ENCODE measurements at regions of chr12 and their contacts with region 1.

Region 1: DNA sequence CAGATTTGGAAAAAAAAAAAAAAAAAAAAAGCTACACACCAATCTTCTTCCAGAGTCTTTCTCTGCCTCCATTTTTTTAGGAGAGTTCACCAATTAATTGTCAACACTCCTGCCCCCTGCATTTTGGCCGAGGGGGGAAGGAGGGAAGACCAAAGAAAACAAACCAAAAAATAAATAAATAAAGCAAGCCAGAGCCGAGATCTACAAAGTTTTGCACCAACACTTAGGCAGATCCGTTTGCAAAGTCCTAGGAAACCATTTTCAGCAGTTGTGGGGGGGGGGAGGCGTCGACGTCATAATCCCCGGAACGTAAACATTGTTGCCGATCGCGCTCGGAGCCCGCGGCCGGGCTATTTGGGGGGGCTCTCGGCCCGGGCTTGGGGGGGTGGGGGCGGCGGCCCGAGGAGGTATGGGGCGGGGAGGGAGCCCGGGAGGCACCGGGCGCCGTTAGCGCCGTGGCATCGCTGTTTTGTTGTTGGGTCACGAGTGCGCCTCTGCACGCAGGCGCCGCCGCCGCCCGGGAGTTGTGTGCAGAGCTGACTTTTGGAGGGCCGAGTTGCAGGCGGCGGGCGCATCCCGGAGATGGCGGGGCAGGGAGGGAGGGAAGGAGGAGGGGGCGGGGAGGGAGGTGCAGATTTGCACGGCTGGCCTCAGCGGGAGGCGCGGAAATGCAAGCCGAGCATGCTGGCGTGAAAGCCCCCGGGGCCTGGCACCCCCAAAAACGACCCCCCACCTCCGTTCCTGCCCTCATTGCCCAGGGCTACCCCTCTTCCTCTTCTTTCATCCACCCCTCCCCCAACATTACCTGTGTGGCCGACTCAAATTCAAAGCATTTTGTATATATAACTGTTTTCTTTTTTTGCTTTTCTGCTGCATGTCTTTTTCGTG is 598 bp downstream of the KDM2B start:
- DNase-seq: peak; percentile 54 to 83
- H3K4me3 ChIP-seq: peak overlapping the region; percentile 78 to 88 (median 84)
- H3K27ac ChIP-seq: peak overlapping the region; percentile 95
- H3K4me1 ChIP-seq: peaks cover 10 to 30% (median 22%) of the 10 kb centered on the region in 4 experiments
- H3K27me3 ChIP-seq: no peaks in the 10 kb centered on the region
- CTCF ChIP-seq: no peak
- EP300 ChIP-seq: no peak
- POLR2A ChIP-seq: peak in 1 of 2 experiments; percentile 66; a peak in 2 of 3 replicates
- RAD21 ChIP-seq: 0 out of 4 replicates have a peak, but pooled peaks of 1 of the 2 experiments have one; percentile 1

Region 2: GRCh38 chr12:120710031-120710804 is 870.0 kb before region 1 on chr12 and contains the start of gene UNC119B:
- CTCF ChIA-PET with region 1: no interaction called
- POLR2A ChIA-PET with region 1: no interaction called
- DNase-seq: peak in 1 of 2 experiments; percentile 82
- H3K4me3 ChIP-seq: peak within 1 kb of the TSS; percentile 72 to 95 (median 87)
- H3K27ac ChIP-seq: peak within 1 kb of the TSS; percentile 82
- H3K4me1 ChIP-seq: peaks cover 5 to 13% (median 9%) of the 10 kb centered on the region in 4 experiments; a peak in 6 of 7 replicates
- H3K27me3 ChIP-seq: no peaks in the 10 kb centered on the region
- CTCF ChIP-seq: no peak
- EP300 ChIP-seq: no peak
- POLR2A ChIP-seq: peak in 1 of 2 experiments; percentile 66; a peak in 1 of 3 replicates
- RAD21 ChIP-seq: no peak
- total RNA-seq, gene UNC119B: 50.1 and 51.9 TPM in 2 replicates

Region 3: DNA sequence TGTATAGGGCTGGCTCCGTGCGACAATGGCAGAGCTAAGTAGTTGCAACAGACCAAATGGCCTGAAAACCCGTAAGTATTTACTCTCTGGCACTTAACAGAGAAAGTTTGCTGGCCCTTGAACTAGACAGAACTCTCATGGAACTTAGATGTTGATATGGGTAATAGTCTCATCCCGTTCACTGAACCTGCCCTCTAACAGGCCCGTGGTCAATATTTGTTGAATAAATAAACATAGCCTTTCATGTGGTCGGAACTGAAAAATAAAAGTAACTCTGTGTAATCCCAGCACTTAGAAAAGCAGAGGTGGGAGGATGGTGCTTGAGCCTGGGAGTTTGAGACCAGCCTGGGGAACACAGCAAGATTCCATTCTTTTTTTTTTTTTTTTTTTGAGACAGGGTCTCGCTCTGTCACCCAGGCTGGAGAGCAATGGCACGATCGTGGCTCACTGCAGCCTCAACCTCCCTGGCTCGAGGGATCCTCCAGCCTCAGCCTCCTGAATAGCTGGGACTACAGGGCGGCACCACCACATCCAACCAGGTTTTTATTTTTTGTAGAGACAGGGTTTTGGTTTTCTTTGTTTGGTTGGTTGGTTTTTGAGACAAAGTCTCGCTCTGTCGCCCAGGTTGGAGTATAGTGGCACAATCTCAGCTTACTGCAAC is 29.1 kb before region 1 on chr12:
- CTCF ChIA-PET with region 1: interaction called, 57 read pairs
- POLR2A ChIA-PET with region 1: interaction called, 793 read pairs
- DNase-seq: no peak
- H3K4me3 ChIP-seq: no peak overlapping the region
- H3K27ac ChIP-seq: no peak overlapping the region
- H3K4me1 ChIP-seq: peaks cover 0 to 3% (median 0%) of the 10 kb centered on the region in 4 experiments; a peak in 1 of 7 replicates
- H3K27me3 ChIP-seq: no peaks in the 10 kb centered on the region
- CTCF ChIP-seq: no peak
- EP300 ChIP-seq: no peak
- POLR2A ChIP-seq: no peak
- RAD21 ChIP-seq: no peak

Region 4: GRCh38 chr12:121600702-121601336 is 20.6 kb after region 1 on chr12:
- CTCF ChIA-PET with region 1: interaction called, 11 read pairs
- POLR2A ChIA-PET with region 1: interaction called, 219 read pairs
- DNase-seq: no peak
- H3K4me3 ChIP-seq: no peak overlapping the region
- H3K27ac ChIP-seq: no peak overlapping the region
- H3K4me1 ChIP-seq: no peaks in the 10 kb centered on the region
- H3K27me3 ChIP-seq: no peaks in the 10 kb centered on the region
- CTCF ChIP-seq: no peak
- EP300 ChIP-seq: no peak
- POLR2A ChIP-seq: no peak
- RAD21 ChIP-seq: no peak

Region 5: DNA sequence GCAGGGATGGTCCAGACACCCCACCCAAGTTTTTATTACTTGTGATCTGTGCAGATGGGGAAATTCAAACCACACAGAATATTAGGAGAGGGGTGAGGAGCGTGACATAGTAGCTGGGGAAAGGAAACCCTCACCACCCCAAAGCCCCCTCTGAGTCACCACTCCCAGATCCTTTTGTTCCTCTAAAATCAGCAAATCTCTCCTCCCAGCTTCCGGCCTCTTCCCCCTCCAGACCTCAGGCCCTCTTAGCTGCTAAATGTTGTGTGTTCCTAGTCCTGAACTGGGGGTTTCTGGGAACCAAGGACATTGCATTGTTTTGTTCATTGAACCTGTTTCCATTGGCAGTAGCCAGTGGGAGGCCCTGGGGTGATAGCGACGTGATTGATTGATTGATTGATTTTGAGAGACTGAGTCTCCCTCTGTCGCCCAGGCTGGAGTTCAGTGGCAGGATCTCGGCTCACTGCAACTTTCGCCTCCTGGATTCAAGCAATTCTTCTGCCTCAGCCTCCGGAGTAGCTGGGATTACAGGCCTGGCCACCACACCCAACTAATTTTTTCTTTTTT is 40.2 kb after region 1 on chr12:
- CTCF ChIA-PET with region 1: interaction called, 17 read pairs
- POLR2A ChIA-PET with region 1: interaction called, 374 read pairs
- DNase-seq: peak in 1 of 2 experiments; percentile 29
- H3K4me3 ChIP-seq: no peak overlapping the region
- H3K27ac ChIP-seq: peak overlapping the region; percentile 16; the same call in 1 of the 2 replicates
- H3K4me1 ChIP-seq: peaks cover 0 to 8% (median 5%) of the 10 kb centered on the region in 4 experiments; a peak in 5 of 7 replicates
- H3K27me3 ChIP-seq: no peaks in the 10 kb centered on the region
- CTCF ChIP-seq: no peak
- EP300 ChIP-seq: no peak
- POLR2A ChIP-seq: no peak
- RAD21 ChIP-seq: no peak

Region 6: GRCh38 chr12:121668750-121669520 is 88.7 kb after region 1 on chr12:
- CTCF ChIA-PET with region 1: interaction called, 48 read pairs
- POLR2A ChIA-PET with region 1: interaction called, 25 read pairs
- DNase-seq: peak in 1 of 2 experiments; percentile 80
- H3K4me3 ChIP-seq: no peak overlapping the region
- H3K27ac ChIP-seq: no peak overlapping the region
- H3K4me1 ChIP-seq: peaks cover 0 to 18% (median 7%) of the 10 kb centered on the region in 4 experiments; a peak in 6 of 7 replicates
- H3K27me3 ChIP-seq: no peaks in the 10 kb centered on the region
- CTCF ChIP-seq: peak; percentile 52 to 62 (median 53)
- EP300 ChIP-seq: no peak
- POLR2A ChIP-seq: no peak
- RAD21 ChIP-seq: peak; percentile 52 to 70